ENCODE measurements at regions of chr2 and their contacts with region 1.

Region 1: DNA sequence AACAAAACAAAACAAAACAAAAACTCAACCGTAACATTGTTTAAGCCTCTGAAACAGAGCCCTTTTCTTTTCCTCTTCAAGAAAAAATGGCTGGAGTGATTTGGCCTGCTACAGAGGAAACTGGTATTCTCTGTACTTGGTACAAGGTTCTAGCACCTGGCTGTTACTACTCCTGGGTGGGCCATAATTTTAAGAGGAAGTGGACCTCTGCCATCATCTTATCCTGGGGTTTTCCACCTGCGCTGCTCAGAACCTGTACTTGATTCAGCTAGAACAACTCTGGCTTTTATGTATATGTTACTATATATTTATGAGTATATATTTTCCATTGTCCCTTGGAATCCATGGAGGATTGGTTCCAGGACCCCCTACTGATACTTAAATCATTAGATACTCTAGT is 22.5 kb downstream of the SRSF7 start:
- DNase-seq: no peak
- ATAC-seq: no peak
- H3K4me3 ChIP-seq: no peak overlapping the region
- H3K27ac ChIP-seq: no peak overlapping the region
- H3K4me1 ChIP-seq: peaks cover 0 to 6% of the 10 kb centered on the region in 2 donors
- H3K27me3 ChIP-seq: no peaks in the 10 kb centered on the region
- CTCF ChIP-seq: no peak

Region 2: GRCh38 chr2:38207168-38207567 is 521.5 kb before region 1 on chr2:
- intact Hi-C with region 1: no loop called
- DNase-seq: no peak
- ATAC-seq: no peak
- H3K4me3 ChIP-seq: no peak overlapping the region
- H3K27ac ChIP-seq: no peak overlapping the region
- H3K4me1 ChIP-seq: no peaks in the 10 kb centered on the region
- H3K27me3 ChIP-seq: no peaks in the 10 kb centered on the region
- CTCF ChIP-seq: no peak

Region 3: DNA sequence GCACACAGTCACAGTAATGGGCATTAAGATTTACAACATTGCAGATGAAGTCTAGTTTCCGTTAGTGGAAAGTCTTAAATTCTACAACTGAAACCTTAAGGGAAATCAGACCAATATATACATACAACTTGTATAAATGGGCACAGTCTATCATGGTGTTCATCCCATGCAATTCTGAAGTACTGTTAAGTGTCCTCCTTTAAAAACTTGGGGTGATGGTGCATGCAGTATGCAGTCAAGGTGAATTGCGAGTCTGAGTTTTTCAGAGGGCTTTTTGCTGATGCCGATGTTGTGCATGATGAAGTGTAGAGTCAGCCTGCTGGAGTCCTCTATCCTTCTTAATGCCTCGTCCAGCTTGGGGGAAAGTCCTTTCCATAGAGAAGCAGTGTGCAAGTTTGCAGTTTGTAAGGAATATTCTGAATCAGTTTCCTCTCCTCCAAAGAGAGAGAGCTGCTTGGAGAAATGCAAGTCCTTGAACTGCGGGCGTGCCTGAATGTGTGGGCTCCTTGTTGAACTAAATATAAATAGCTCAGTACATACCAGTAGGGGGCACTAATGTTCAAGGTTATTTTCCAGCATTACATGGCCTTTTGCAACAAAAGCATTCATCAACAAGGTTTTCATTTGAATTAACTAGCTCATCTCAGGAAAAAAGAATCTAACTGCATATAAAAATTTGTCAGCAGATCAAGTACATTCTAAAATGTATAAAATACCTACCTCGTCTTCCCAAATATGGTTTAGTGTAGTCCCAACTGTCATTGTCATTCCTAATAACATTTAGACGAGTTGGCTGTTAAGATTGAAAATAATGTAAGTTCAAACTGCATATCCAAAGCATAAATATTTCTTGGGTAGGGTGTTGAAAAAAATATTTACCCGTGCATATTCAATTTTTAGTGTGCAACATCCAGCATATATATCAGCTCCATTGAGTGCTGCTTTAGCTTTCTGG is 147.2 kb before region 1 on chr2:
- intact Hi-C with region 1: loop called in 1 of 2 experiments (anchors 5 kb)
- DNase-seq: peak; percentile 40 to 80 (median 61)
- ATAC-seq: peak; percentile 98
- H3K4me3 ChIP-seq: no peak overlapping the region
- H3K27ac ChIP-seq: no peak overlapping the region
- H3K4me1 ChIP-seq: peaks cover under 1 to 5% of the 10 kb centered on the region in 2 donors
- H3K27me3 ChIP-seq: no peaks in the 10 kb centered on the region
- CTCF ChIP-seq: peak; percentile 44 to 47

Measured in left lung (tissue), 14 donors.